ENCODE measurements at regions of chr3 and their contacts with region 1.

Region 1: GRCh38 chr3:150495563-150496168 is 50.6 kb downstream of the SERP1 start:
- DNase-seq: peak; percentile 53
- CTCF ChIP-seq: peak; percentile 61

Region 2: DNA sequence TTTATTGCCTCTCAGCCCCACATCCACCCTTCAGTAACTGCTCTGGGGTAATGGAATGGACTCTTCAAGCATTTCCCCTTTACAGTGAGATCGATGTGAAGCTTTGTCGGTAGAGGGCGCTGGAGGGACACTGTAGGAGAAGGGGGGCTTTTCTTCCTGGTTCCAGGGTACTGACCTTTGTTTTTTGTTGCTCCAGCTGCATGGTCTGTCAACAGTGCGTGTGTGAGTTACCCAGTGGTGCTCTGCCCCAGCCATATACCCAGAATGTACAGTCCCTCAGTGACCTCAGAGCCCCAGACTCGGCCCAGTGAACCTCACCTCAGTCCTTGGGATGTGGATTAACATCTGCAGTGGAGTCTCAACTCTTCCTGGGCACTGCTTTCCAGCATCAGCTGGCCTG is 267.8 kb before region 1 on chr3:
- CTCF ChIA-PET with region 1: interaction called, 50 read pairs
- POLR2A ChIA-PET with region 1: no interaction called
- DNase-seq: peak; percentile 52
- CTCF ChIP-seq: peak; percentile 62

Region 3: GRCh38 chr3:150232992-150233451 is 262.6 kb before region 1 on chr3:
- CTCF ChIA-PET with region 1: interaction called, 50 read pairs
- POLR2A ChIA-PET with region 1: no interaction called
- DNase-seq: no peak
- CTCF ChIP-seq: no peak

Region 4: DNA sequence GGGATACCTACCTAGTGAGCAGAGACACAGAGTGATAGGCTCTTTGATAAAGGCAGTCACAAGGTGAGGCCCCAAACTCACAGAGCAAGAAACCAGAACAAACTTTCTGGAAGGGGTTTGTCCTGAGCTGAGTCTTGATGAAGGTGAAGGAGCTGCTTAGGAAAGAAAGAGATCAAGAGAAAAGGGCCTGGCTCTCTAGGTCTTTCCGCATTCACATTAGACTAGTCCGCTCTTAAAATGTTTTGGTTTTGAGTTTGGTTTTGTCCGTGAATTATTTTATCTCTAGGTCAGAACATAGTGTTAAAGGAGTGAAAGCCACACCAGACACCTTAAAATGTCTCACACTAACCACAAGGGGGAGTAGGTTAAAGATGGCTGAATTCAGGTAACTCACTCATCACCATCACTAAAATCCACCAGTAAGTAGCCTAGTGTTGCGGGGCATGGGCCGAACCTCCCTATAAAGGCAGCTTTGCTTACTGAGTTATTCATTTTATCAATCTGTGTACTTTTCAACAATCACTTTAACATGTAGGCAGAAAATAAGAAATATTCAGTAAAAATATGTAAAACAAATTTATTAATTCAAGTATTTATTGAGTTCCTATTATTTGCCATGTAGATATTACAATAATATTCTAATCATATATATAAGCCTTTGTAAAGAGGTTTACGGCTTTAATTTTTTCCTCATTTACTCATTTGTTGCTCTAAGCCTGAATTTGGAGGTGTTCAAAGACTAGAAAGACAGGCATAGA is 209.1 kb before region 1 on chr3:
- CTCF ChIA-PET with region 1: interaction called, 23 read pairs
- POLR2A ChIA-PET with region 1: no interaction called
- DNase-seq: peak; percentile 36
- CTCF ChIP-seq: peak; percentile 56

Region 5: DNA sequence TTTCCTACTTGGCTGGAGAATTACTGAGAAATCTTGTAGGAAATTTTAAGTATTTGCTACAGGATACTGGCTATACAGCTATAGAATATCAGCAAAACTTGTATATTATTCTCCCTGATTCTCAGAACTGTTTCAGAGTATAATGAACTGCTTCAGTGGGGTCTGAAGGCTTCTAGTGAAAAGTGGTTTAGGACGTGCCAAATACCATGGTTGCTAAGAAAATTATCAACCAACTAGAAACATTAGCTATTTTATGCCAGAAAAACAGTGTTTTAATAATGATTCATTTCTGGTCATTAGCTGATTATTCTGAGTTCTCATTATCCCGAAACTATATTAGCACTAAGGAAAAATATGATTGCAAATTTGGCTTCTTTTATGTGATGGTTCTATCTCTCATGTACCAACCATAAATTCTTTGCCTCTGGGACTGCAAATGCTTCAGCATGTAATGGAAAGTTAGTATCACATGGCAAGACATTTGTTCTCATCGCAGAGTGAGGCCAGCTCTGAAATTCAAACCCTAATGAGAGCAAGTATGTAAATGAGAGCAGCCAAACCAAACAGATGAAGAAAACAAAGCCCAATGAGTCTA is 98.6 kb before region 1 on chr3:
- CTCF ChIA-PET with region 1: no interaction called
- POLR2A ChIA-PET with region 1: no interaction called
- DNase-seq: no peak
- CTCF ChIP-seq: no peak

Region 6: DNA sequence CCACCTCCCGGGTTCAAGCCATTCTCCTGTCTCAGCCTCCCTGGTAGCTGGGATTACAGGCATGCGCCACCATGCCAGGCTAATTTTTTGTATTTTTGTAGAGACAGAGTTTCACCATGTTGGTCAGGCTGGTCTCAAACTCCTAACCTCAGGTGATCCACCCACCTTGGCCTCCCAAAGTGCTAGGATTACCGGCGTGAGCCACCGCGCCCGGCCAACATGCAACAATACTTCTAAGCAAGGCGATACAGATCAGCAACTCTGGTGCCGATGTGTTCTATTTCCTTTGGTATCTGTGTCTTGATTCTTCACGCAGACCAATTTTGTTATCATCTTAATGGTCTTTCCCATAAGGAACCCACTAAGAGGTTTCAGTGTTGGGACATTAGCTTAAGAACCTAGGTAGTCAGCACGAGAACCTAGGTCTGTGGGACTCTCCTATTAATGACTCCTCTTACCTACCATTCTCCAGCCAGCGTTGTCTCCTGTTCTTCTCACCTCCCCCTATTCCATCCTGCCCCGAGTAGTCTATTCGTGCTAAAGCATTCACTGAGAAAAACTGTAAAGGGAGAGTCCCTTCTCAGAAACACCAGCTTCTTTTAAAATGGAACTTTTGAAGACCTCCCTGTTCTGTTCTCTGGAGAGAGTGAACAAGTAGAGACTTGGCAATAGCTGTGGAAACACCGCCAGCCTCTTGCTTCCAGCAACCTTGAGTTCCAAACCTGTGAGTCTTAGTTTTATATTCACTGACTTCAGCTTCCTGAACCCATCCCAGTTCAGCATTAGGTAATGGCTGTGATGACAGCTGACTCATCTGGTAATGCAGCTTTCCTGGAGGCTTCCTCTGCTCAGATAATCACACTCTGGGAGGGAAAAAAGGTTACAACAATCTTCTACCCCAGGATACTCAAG is 26.4 kb before region 1 on chr3:
- CTCF ChIA-PET with region 1: interaction called, 10 read pairs
- POLR2A ChIA-PET with region 1: no interaction called
- DNase-seq: no peak
- CTCF ChIP-seq: no peak

Region 7: GRCh38 chr3:150483226-150483625 is 12.4 kb before region 1 on chr3:
- CTCF ChIA-PET with region 1: interaction called, 34 read pairs
- POLR2A ChIA-PET with region 1: no interaction called
- DNase-seq: no peak
- CTCF ChIP-seq: no peak

Measured in GM10248 (cell line).